Activated CD4-positive, alpha-beta T cell treated with anti-CD3 and anti-CD28 coated beads for 36 hours (primary cell): ENCODE measurements at regions of chr4 and their contacts with region 1.

Region 1: GRCh38 chr4:6963139-6963611 is 53.5 kb downstream of the TBC1D14 start:
- DNase-seq: no peak
- ATAC-seq: no peak
- H3K4me3 Mint-ChIP-seq: no peak overlapping the region
- H3K27ac Mint-ChIP-seq: no peak overlapping the region
- H3K4me1 Mint-ChIP-seq: peaks cover 44% of the 10 kb centered on the region
- H3K27me3 Mint-ChIP-seq: no peaks in the 10 kb centered on the region

Region 2: DNA sequence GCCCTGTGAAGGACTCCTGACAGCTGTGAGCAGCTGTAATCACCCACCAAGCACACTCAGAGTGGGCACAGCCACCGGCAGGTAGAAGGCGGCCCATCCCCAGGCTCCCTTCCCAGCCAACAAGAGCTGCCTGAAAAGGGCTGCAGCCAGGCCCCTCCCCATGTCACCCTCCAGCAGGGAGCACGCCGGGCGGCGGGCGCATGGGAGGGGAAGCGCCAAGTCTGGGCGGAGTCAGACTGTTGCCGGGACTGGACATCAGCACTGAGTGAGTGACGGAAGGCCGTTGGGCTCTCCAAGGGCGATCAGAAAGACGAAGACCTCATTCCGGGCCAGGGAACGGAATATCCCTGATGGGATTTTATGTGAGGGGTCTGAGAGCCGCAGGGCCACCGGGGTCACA is 572.8 kb before region 1 on chr4:
- CTCF ChIA-PET with region 1: no interaction called
- POLR2A ChIA-PET with region 1: no interaction called
- intact Hi-C with region 1: no loop called
- DNase-seq: no peak
- ATAC-seq: no peak
- H3K4me3 Mint-ChIP-seq: no peak overlapping the region
- H3K27ac Mint-ChIP-seq: no peak overlapping the region
- H3K4me1 Mint-ChIP-seq: no peaks in the 10 kb centered on the region
- H3K27me3 Mint-ChIP-seq: peaks cover 6% of the 10 kb centered on the region

Region 3: DNA sequence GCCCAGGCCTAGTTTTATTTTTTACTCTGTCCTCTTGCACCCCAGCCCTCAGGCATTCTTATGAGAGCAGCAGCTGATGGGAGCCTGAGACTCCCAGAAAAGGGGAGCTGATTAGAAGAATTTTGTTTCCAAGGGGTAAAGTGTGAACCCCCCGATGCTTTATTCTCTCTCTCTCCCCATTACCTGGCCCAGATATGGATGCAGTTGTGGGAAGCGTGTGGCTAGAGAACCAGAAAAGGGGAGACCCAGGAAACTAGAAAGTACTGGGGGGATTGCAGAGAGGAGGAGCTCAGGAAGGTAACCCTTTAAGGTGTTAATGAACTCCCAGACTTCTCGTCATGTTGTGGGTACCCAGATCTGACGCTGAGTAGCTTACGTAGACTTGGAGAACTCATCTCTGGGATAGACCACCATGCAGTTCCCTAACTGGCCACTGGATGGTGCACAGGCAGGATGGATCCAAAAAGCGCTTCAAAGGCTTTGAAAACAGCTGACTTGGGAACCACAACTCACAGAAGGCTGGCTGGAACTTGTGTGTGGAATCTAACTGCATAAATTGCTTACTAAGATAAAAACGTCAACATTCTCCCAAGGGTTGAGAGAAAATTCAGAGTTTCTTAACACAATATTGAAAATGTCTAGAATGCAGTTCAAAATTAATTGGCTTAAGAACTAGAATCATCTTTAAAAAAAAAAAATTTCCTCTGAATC is 11.1 kb after region 1 on chr4:
- CTCF ChIA-PET with region 1: interaction called, 10 read pairs
- POLR2A ChIA-PET with region 1: no interaction called
- intact Hi-C with region 1: no loop called
- DNase-seq: peak; percentile 90
- ATAC-seq: peak; percentile 96
- H3K4me3 Mint-ChIP-seq: no peak overlapping the region
- H3K27ac Mint-ChIP-seq: no peak overlapping the region
- H3K4me1 Mint-ChIP-seq: peaks cover 10% of the 10 kb centered on the region
- H3K27me3 Mint-ChIP-seq: no peaks in the 10 kb centered on the region

Region 4: GRCh38 chr4:7581477-7581876 is 618.3 kb after region 1 on chr4:
- CTCF ChIA-PET with region 1: no interaction called
- POLR2A ChIA-PET with region 1: no interaction called
- intact Hi-C with region 1: no loop called
- DNase-seq: peak; percentile 39
- ATAC-seq: no peak
- H3K4me3 Mint-ChIP-seq: no peak overlapping the region
- H3K27ac Mint-ChIP-seq: no peak overlapping the region
- H3K4me1 Mint-ChIP-seq: no peaks in the 10 kb centered on the region
- H3K27me3 Mint-ChIP-seq: peaks cover 2% of the 10 kb centered on the region